Uterus (tissue), 4 donors: ENCODE measurements at regions of chr22 and their contacts with region 1.

Region 1: GRCh38 chr22:26756675-26757293 is 99.4 kb downstream of the MIAT start:
- DNase-seq: peak; percentile 36 to 74
- H3K4me3 ChIP-seq: no peak overlapping the region
- H3K27ac ChIP-seq: no peak overlapping the region
- H3K4me1 ChIP-seq: no peaks in the 10 kb centered on the region
- H3K27me3 ChIP-seq: no peaks in the 10 kb centered on the region
- CTCF ChIP-seq: peak; percentile 71 to 94 (median 93)
- POLR2A ChIP-seq: no peak

Region 2: GRCh38 chr22:26700886-26701285 is 55.9 kb before region 1 on chr22:
- intact Hi-C with region 1: no loop called
- DNase-seq: no peak
- H3K4me3 ChIP-seq: no peak overlapping the region
- H3K27ac ChIP-seq: no peak overlapping the region
- H3K4me1 ChIP-seq: no peaks in the 10 kb centered on the region
- H3K27me3 ChIP-seq: no peaks in the 10 kb centered on the region
- CTCF ChIP-seq: no peak
- POLR2A ChIP-seq: no peak

Region 3: DNA sequence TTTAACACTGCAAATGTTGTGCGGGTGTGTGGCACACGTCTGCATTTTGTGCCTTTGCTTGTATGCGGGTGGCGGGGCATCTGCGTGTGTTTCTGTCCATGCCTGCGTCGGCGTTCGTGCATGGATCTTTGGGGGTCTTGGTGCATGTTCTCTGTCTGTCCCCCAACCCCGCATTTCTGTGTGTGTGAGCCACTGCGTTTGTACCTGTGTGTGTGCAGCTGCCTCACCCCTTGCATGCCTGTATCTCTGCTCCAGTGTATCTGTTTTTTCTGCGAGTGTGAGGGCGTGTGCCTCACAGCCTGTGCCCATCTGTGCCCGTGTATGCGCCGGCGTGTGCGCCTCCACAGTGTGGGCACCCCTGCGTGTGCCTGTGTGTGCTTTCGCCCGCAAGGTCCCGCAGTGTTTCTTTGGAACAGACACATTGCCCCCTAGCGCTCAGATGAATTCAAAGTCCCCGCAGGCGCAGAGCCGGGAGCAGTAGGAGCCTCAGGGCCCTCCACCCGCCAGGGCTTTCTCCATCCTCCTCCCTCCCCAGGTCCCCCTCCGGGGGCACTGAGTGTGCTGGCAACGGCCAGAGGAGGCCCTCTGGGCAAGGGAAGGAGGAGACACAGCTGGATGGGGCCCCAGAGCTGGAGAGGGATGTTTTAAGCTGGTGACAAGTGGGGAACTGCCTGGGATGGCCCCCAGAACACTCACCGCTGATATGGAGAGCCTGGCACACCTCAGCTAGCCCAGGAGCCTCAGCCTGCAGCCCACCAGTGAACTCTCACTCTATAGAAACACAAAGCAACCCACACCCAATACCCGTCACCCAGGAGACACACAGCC is 1047.9 kb after region 1 on chr22:
- intact Hi-C with region 1: loop called (anchors 5 kb)
- DNase-seq: peak; percentile 62 to 74
- H3K4me3 ChIP-seq: no peak overlapping the region
- H3K27ac ChIP-seq: no peak overlapping the region
- H3K4me1 ChIP-seq: peaks cover 0 to 4% of the 10 kb centered on the region in 2 donors
- H3K27me3 ChIP-seq: peaks cover 0 to 6% of the 10 kb centered on the region in 2 donors
- CTCF ChIP-seq: peak; percentile 66 to 77 (median 68)
- POLR2A ChIP-seq: no peak

Region 4: GRCh38 chr22:28009272-28009827 is 1252.6 kb after region 1 on chr22:
- intact Hi-C with region 1: loop called (anchors 10 kb)
- DNase-seq: peak; percentile 78 to 80
- H3K4me3 ChIP-seq: no peak overlapping the region
- H3K27ac ChIP-seq: no peak overlapping the region
- H3K4me1 ChIP-seq: no peaks in the 10 kb centered on the region
- H3K27me3 ChIP-seq: no peaks in the 10 kb centered on the region
- CTCF ChIP-seq: peak; percentile 90 to 98 (median 95)
- POLR2A ChIP-seq: no peak